Heart left ventricle (tissue), 16 donors: ENCODE measurements at regions of chr3 and their contacts with region 1.

Region 1: GRCh38 chr3:50652709-50653108 is 22.0 kb upstream of the DOCK3 start:
- DNase-seq: peak in 3 of 5 donors; percentile 41 to 59 (median 56)
- ATAC-seq: peak in 3 of 4 donors; percentile 9 to 40 (median 14)
- H3K4me3 ChIP-seq: no peak overlapping the region
- H3K27ac ChIP-seq: peak overlapping the region in 6 of 12 donors; percentile 0 to 97 (median 84)
- H3K4me1 ChIP-seq: peaks cover 0 to 48% (median 19%) of the 10 kb centered on the region in 12 donors
- H3K27me3 ChIP-seq: no peaks in the 10 kb centered on the region
- CTCF ChIP-seq: peak in 11 of 12 donors; percentile 34 to 60 (median 44)
- POLR2A ChIP-seq: no peak

Region 2: DNA sequence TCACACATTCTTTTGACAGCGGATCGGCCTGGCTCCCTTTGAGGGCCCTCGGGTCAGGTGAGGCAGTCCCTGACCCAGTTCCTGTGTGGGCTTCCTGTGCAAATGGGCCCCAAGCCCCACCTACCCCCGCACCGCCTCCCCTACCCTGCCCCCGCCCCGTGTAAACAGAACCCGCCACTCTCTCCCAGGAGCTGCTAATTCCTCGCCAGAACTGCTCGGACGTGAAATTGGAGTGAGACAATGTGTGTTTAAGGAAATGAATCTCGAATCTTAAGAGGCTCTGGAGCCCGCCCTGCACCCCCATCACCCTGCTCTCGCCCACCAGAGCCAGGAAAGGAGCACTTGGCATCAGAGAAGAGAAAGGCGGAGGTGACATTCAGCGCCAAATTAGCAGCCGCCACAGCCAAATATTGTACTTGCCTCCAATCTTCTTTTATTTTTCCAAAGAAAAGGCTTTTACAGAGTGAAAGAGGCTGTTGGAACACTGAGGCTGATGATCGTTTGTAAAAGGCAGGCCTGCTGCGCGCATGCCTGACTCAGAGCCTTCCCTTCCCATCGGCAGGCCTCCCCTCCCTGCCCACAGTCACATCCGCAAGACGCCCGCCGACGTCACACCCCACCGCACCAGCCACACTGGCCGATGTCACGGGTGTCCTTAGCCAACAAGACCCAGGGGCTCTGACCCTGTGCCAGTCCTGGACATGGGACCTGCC is 202.3 kb before region 1 on chr3:
- intact Hi-C with region 1: no loop called
- DNase-seq: peak; percentile 43 to 82 (median 54)
- ATAC-seq: peak; percentile 28 to 89 (median 49)
- H3K4me3 ChIP-seq: peak overlapping the region in 7 of 12 donors; percentile 26 to 48 (median 40)
- H3K27ac ChIP-seq: peak overlapping the region in 7 of 12 donors; percentile 19 to 74 (median 51)
- H3K4me1 ChIP-seq: no peaks in the 10 kb centered on the region
- H3K27me3 ChIP-seq: no peaks in the 10 kb centered on the region
- CTCF ChIP-seq: no peak
- POLR2A ChIP-seq: no peak

Region 3: GRCh38 chr3:50487181-50487580 is 165.5 kb before region 1 on chr3:
- intact Hi-C with region 1: no loop called
- DNase-seq: no peak
- ATAC-seq: no peak
- H3K4me3 ChIP-seq: no peak overlapping the region
- H3K27ac ChIP-seq: no peak overlapping the region
- H3K4me1 ChIP-seq: peaks cover 0 to 10% (median 0%) of the 10 kb centered on the region in 12 donors
- H3K27me3 ChIP-seq: no peaks in the 10 kb centered on the region
- CTCF ChIP-seq: no peak
- POLR2A ChIP-seq: no peak

Region 4: GRCh38 chr3:50568947-50569749 is 83.6 kb before region 1 on chr3 and contains the start of gene HEMK1:
- intact Hi-C with region 1: loop called in 1 of 10 experiments (anchors 10 kb)
- DNase-seq: peak; percentile 98 to 99 (median 99)
- ATAC-seq: peak; percentile 87 to 92 (median 89)
- H3K4me3 ChIP-seq: peak within 1 kb of the TSS; percentile 57 to 95 (median 81)
- H3K27ac ChIP-seq: peak within 1 kb of the TSS; percentile 70 to 98 (median 95)
- H3K4me1 ChIP-seq: peaks cover 0 to 66% (median 34%) of the 10 kb centered on the region in 12 donors
- H3K27me3 ChIP-seq: no peaks in the 10 kb centered on the region
- CTCF ChIP-seq: no peak
- POLR2A ChIP-seq: peak in 1 of 2 donors; percentile 34
- total RNA-seq, gene HEMK1: 7.8 to 19.7 (median 13.8) TPM

Region 5: GRCh38 chr3:50620420-50620819 is 32.3 kb before region 1 on chr3:
- intact Hi-C with region 1: loop called in 7 of 10 experiments (anchors 1 to 5 kb)
- DNase-seq: peak in 1 of 5 donors; percentile 16
- ATAC-seq: no peak
- H3K4me3 ChIP-seq: peak overlapping the region in 2 of 12 donors; percentile 25 to 95
- H3K27ac ChIP-seq: peak overlapping the region; percentile 56 to 99 (median 97)
- H3K4me1 ChIP-seq: peaks cover 0 to 93% (median 75%) of the 10 kb centered on the region in 12 donors
- H3K27me3 ChIP-seq: no peaks in the 10 kb centered on the region
- CTCF ChIP-seq: no peak
- POLR2A ChIP-seq: no peak